Activated CD4-positive, alpha-beta T cell treated with anti-CD3 and anti-CD28 coated beads, Interleukin-2, amount 10 ng/mL, durations not matched to agents 7 days and 5 days (primary cell): ENCODE measurements at regions of chr11 and their contacts with region 1.

Region 1: DNA sequence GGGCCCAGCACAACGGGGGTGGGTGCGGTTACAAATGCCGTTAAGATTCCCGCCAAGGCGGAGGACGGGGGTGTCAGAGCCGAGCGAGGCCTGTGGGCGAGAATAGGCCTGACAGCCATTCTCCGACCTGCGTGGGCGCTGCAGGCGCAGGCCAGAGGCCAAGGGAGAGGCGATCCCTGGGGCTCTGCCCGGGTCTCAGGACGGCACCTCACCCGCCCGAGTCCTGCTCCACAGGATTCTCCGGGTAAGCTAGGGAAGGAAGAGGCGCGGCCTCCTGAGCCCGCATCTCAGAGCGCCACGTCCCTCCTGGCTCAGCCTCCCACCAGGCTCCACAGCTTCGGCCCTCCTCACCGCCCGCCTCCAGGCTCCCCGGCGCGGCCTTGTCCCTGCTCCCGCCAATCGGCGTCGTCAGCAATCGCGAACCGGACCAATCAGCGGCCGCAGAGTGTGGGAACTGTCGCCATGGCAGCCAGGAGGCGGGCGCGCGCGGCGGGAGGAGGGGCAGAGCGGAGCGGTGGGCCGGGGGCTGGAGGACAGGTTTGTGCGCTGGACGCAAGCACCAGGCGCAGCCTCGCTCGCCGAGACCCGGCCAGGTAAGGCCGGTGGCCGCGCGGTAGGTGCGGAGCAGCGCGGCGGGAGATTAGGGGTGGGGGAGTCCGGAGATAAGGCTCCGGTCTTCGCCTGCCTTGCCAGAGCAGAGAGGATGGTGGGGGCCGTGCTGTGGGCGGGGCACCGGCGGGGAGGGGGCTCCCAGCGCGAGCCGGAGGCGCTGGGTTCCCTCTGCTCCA is at the start of gene NUCB2:
- DNase-seq: peak; percentile 97
- H3K4me3 Mint-ChIP-seq: peak within 1 kb of the TSS; percentile 85
- H3K27ac Mint-ChIP-seq: peak within 1 kb of the TSS; percentile 91
- H3K4me1 Mint-ChIP-seq: peaks cover 54% of the 10 kb centered on the region
- H3K27me3 Mint-ChIP-seq: peaks cover 8% of the 10 kb centered on the region
- total RNA-seq, gene NUCB2: 161 to 180 TPM

Region 2: GRCh38 chr11:17221968-17222367 is 54.5 kb before region 1 on chr11:
- CTCF ChIA-PET with region 1: interaction called, 3 read pairs
- POLR2A ChIA-PET with region 1: interaction called, 17 read pairs
- DNase-seq: no peak
- H3K4me3 Mint-ChIP-seq: no peak overlapping the region
- H3K27ac Mint-ChIP-seq: no peak overlapping the region
- H3K4me1 Mint-ChIP-seq: no peaks in the 10 kb centered on the region
- H3K27me3 Mint-ChIP-seq: peaks cover 10% of the 10 kb centered on the region